Caco-2 (cell line): ENCODE measurements at regions of chr20 and their contacts with region 1.

Region 1: DNA sequence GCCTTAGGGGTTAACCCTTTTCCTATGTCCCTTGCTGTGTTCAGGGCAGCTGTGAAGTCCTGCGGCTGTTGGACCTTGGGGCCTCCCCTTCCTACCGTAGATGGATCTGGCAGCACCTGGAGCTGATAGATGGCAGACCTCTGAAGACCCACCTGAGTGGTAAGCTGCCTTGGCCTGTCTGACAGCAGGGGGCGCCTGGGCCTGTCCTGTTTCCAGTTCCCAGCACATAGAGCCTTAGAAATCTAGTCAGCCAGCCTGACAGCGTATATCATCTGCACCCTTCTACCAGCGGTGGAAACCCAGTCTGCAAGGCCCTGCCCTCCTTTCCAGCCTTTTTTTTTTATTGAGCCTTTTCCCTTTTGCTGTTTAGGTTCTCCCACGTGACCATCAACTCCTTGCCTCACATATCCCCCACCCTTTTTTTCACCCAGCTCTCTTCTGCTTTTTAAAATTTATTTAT is 26.6 kb downstream of the CNBD2 start:
- DNase-seq: peak; percentile 97 to 98
- H3K4me3 ChIP-seq: no peak overlapping the region
- H3K4me3 Mint-ChIP-seq: no peak overlapping the region
- H3K27ac Mint-ChIP-seq: no peak overlapping the region
- H3K4me1 ChIP-seq: 0 out of 2 replicates have a peak, but pooled peaks cover 3% of the 10 kb centered on the region
- H3K4me1 Mint-ChIP-seq: no peaks in the 10 kb centered on the region
- H3K27me3 ChIP-seq: no peaks in the 10 kb centered on the region
- H3K27me3 Mint-ChIP-seq: no peaks in the 10 kb centered on the region
- CTCF ChIP-seq: peak; percentile 100

Region 2: DNA sequence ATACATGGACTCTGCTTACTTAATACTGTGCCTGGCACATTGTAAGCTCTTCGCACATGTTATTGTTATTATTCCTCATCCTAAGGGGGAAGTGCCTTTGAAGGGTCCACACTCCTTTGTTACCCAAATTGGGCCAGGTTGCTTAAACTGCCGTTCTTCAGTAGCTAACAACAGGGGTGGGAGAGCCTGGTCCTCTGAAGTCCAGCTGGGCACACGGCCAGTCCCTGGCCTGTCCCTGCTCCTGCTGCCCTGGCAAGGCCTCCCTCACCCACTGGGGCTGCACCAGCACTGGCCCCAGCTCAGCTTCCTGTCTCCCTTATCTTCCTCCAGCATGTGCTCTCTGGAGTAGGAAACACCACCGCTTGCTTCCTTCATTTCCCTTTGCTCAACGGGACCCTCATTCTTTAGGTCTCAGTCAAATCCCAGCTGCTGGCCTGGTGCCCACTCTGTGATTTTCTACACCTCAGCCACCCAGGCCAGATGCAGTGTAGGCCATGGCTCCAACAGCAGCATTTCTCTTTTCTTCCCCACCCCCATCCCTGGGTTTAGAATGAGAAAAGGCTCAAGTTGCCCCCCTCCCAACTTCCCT is 828.7 kb before region 1 on chr20:
- CTCF ChIA-PET with region 1: no interaction called
- POLR2A ChIA-PET with region 1: no interaction called
- intact Hi-C with region 1: no loop called
- DNase-seq: peak in 1 of 2 experiments; percentile 30
- H3K4me3 ChIP-seq: no peak overlapping the region
- H3K4me3 Mint-ChIP-seq: no peak overlapping the region
- H3K27ac Mint-ChIP-seq: no peak overlapping the region
- H3K4me1 ChIP-seq: peaks cover 6% of the 10 kb centered on the region
- H3K4me1 Mint-ChIP-seq: peaks cover 1% of the 10 kb centered on the region
- H3K27me3 ChIP-seq: no peaks in the 10 kb centered on the region
- H3K27me3 Mint-ChIP-seq: no peaks in the 10 kb centered on the region
- CTCF ChIP-seq: no peak

Region 3: DNA sequence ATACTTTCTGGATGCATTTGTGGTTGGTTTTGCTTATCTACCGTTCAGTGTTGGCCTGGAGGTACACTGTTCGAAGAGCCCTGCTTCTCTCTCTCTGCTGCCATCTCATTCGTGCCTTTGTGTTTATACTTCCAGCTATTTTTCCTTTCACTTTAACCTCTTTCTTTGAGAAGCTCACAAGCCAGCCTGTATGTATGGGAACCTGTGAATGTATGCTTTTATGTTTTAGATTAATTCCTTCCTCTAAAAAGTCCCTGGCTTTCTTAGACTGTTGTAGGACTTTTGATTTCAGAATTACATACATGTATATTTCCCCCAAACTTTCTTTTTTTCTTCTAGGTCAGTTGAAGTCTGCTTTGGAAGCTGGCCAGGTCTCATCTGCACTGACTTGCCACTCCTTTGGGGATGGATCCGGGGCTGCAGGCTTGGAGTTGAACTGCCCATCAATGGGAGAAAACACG is 123.7 kb before region 1 on chr20:
- CTCF ChIA-PET with region 1: no interaction called
- POLR2A ChIA-PET with region 1: no interaction called
- intact Hi-C with region 1: no loop called
- DNase-seq: no peak
- H3K4me3 ChIP-seq: no peak overlapping the region
- H3K4me3 Mint-ChIP-seq: no peak overlapping the region
- H3K27ac Mint-ChIP-seq: peak overlapping the region; percentile 19
- H3K4me1 ChIP-seq: peaks cover 14% of the 10 kb centered on the region
- H3K4me1 Mint-ChIP-seq: peaks cover 11% of the 10 kb centered on the region
- H3K27me3 ChIP-seq: no peaks in the 10 kb centered on the region
- H3K27me3 Mint-ChIP-seq: no peaks in the 10 kb centered on the region
- CTCF ChIP-seq: no peak

Region 4: DNA sequence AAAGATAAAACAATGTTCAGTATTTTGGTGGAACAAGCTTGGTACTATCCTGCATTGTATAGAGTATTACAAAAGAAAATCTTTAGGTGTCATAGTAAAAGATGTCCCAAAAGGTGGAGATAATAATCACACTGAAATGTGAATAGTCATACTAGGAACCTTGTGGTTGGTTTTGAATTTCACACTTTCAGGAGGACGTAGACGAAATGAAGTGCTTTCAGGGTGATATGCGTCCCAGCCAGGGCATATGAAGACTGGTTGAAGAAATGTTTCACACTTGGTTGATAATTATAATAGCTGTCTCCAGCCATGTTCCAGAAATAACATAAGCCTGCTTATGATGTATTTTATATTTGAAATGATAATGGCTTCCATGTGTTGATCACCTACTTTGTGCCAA is 101.1 kb before region 1 on chr20:
- CTCF ChIA-PET with region 1: no interaction called
- POLR2A ChIA-PET with region 1: no interaction called
- intact Hi-C with region 1: no loop called
- DNase-seq: no peak
- H3K4me3 ChIP-seq: no peak overlapping the region
- H3K4me3 Mint-ChIP-seq: no peak overlapping the region
- H3K27ac Mint-ChIP-seq: no peak overlapping the region
- H3K4me1 ChIP-seq: no peaks in the 10 kb centered on the region
- H3K4me1 Mint-ChIP-seq: no peaks in the 10 kb centered on the region
- H3K27me3 ChIP-seq: no peaks in the 10 kb centered on the region
- H3K27me3 Mint-ChIP-seq: no peaks in the 10 kb centered on the region
- CTCF ChIP-seq: no peak

Region 5: GRCh38 chr20:35941620-35942019 is 53.4 kb before region 1 on chr20:
- CTCF ChIA-PET with region 1: no interaction called
- POLR2A ChIA-PET with region 1: no interaction called
- intact Hi-C with region 1: no loop called
- DNase-seq: no peak
- H3K4me3 ChIP-seq: no peak overlapping the region
- H3K4me3 Mint-ChIP-seq: no peak overlapping the region
- H3K27ac Mint-ChIP-seq: no peak overlapping the region
- H3K4me1 ChIP-seq: no peaks in the 10 kb centered on the region
- H3K4me1 Mint-ChIP-seq: no peaks in the 10 kb centered on the region
- H3K27me3 ChIP-seq: no peaks in the 10 kb centered on the region
- H3K27me3 Mint-ChIP-seq: no peaks in the 10 kb centered on the region
- CTCF ChIP-seq: no peak

Region 6: GRCh38 chr20:35954200-35954906 is 40.7 kb before region 1 on chr20 and contains the start of gene SCAND1:
- CTCF ChIA-PET with region 1: interaction called, 31 read pairs
- POLR2A ChIA-PET with region 1: interaction called, 14 read pairs
- intact Hi-C with region 1: loop called (anchors 2 kb)
- DNase-seq: peak; percentile 100
- H3K4me3 ChIP-seq: peak within 1 kb of the TSS; percentile 86
- H3K4me3 Mint-ChIP-seq: peak within 1 kb of the TSS; percentile 88
- H3K27ac Mint-ChIP-seq: peak within 1 kb of the TSS; percentile 96
- H3K4me1 ChIP-seq: peaks cover 22% of the 10 kb centered on the region
- H3K4me1 Mint-ChIP-seq: peaks cover 9% of the 10 kb centered on the region
- H3K27me3 ChIP-seq: no peaks in the 10 kb centered on the region
- H3K27me3 Mint-ChIP-seq: no peaks in the 10 kb centered on the region
- CTCF ChIP-seq: peak; percentile 99 to 100
- total RNA-seq, gene SCAND1: 125 and 129 TPM in 2 replicates

Region 7: GRCh38 chr20:36050436-36051317 is 55.7 kb after region 1 on chr20:
- CTCF ChIA-PET with region 1: interaction called, 4 read pairs
- POLR2A ChIA-PET with region 1: no interaction called
- intact Hi-C with region 1: loop called (anchors 2 kb)
- DNase-seq: peak; percentile 99
- H3K4me3 ChIP-seq: peak overlapping the region; percentile 67
- H3K4me3 Mint-ChIP-seq: peak overlapping the region; percentile 69
- H3K27ac Mint-ChIP-seq: peak overlapping the region; percentile 88
- H3K4me1 ChIP-seq: peaks cover 34% of the 10 kb centered on the region
- H3K4me1 Mint-ChIP-seq: peaks cover 44% of the 10 kb centered on the region
- H3K27me3 ChIP-seq: no peaks in the 10 kb centered on the region
- H3K27me3 Mint-ChIP-seq: no peaks in the 10 kb centered on the region
- CTCF ChIP-seq: no peak

Region 8: DNA sequence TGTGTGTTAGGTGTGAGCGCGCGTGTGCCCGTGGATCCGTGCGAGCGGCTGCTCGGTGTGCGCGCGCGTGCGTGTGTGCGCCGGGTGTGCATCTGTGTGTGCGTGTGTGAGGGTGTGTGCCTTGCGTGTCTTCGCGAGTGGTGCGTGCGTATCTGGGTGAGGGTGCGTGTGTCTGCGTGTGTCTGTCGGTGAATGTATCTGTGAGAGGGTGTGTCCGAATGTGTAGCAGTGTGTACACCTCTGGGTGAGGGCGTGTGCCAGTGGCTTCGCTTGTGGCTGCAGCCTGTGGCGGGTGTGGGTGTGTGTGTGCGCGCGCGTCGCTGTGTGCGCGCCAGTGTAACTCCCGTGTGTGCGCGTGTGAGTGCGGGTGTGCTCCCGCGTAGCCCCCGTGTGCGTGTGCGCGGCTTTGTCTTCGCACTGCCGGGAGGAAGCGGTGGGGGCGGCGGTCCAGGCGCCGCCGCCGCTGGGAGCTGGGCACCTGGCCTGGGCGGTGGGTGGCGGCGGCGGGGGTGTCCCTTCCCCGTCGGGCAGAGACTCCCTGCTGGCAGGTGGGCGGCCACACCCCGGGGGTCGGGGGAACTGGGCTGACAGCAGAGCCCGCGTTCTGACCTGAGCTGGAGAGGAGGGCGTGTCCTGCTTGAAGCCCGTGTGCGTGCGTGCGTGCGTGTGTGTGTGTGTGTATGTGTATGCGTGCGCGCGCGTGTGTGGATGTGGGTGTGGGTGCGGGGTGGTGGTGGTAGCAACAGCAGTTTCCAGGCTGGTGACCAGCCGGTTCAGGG is 98.2 kb after region 1 on chr20:
- CTCF ChIA-PET with region 1: interaction called, 36 read pairs
- POLR2A ChIA-PET with region 1: interaction called, 5 read pairs
- intact Hi-C with region 1: no loop called
- DNase-seq: peak; percentile 77 to 83
- H3K4me3 ChIP-seq: peak overlapping the region; percentile 86
- H3K4me3 Mint-ChIP-seq: peak overlapping the region; percentile 93
- H3K27ac Mint-ChIP-seq: peak overlapping the region; percentile 82
- H3K4me1 ChIP-seq: peaks cover 60% of the 10 kb centered on the region
- H3K4me1 Mint-ChIP-seq: peaks cover 43% of the 10 kb centered on the region
- H3K27me3 ChIP-seq: no peaks in the 10 kb centered on the region
- H3K27me3 Mint-ChIP-seq: no peaks in the 10 kb centered on the region
- CTCF ChIP-seq: no peak

Region 9: GRCh38 chr20:36145877-36146707 is 151.1 kb after region 1 on chr20:
- CTCF ChIA-PET with region 1: interaction called, 785 read pairs
- POLR2A ChIA-PET with region 1: no interaction called
- intact Hi-C with region 1: no loop called
- DNase-seq: no peak
- H3K4me3 ChIP-seq: no peak overlapping the region
- H3K4me3 Mint-ChIP-seq: no peak overlapping the region
- H3K27ac Mint-ChIP-seq: no peak overlapping the region
- H3K4me1 ChIP-seq: peaks cover 8% of the 10 kb centered on the region
- H3K4me1 Mint-ChIP-seq: peaks cover 6% of the 10 kb centered on the region
- H3K27me3 ChIP-seq: no peaks in the 10 kb centered on the region
- H3K27me3 Mint-ChIP-seq: no peaks in the 10 kb centered on the region
- CTCF ChIP-seq: no peak

Region 10: DNA sequence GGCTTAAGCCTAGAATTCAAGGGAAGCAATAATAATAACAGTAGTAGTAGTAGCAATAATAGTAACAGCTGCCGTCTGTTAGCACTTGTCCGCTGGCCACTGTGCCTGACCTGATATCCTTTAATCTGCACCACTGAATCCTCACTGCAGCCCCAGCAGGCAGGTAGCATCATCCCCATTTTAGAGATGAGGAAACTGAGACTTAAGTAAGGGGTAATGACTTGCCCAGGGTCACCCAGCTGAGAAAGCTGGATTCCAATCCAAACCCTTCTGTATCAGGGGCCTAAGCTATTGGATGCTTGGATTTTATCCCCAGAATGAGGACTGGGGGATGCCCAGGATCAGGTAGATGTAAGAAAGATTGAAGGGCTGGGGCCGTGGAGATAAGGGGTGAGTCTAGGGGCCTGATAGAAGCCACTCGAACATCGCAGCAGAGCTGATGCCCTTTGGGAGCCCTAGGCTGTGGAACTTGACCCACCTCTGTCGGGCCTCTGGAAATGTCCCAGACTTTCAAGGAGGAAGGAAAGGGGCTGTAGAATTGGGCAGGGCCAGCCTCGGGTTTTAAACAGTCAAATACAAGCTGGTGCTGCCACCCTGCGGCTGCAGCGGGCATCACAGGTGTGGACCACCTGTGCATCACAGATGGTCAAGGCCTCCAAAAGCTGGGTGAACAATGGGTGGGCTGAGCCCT is 444.2 kb after region 1 on chr20:
- CTCF ChIA-PET with region 1: interaction called, 5 read pairs
- POLR2A ChIA-PET with region 1: no interaction called
- intact Hi-C with region 1: loop called (anchors 5 kb)
- DNase-seq: peak; percentile 88 to 94
- H3K4me3 ChIP-seq: no peak overlapping the region
- H3K4me3 Mint-ChIP-seq: no peak overlapping the region
- H3K27ac Mint-ChIP-seq: no peak overlapping the region
- H3K4me1 ChIP-seq: peaks cover 3% of the 10 kb centered on the region; the same call in 1 of the 2 replicates
- H3K4me1 Mint-ChIP-seq: peaks cover 11% of the 10 kb centered on the region
- H3K27me3 ChIP-seq: no peaks in the 10 kb centered on the region
- H3K27me3 Mint-ChIP-seq: no peaks in the 10 kb centered on the region
- CTCF ChIP-seq: peak; percentile 99 to 100